ENCODE measurements at regions of chr9 and their contacts with region 1.

Region 1: DNA sequence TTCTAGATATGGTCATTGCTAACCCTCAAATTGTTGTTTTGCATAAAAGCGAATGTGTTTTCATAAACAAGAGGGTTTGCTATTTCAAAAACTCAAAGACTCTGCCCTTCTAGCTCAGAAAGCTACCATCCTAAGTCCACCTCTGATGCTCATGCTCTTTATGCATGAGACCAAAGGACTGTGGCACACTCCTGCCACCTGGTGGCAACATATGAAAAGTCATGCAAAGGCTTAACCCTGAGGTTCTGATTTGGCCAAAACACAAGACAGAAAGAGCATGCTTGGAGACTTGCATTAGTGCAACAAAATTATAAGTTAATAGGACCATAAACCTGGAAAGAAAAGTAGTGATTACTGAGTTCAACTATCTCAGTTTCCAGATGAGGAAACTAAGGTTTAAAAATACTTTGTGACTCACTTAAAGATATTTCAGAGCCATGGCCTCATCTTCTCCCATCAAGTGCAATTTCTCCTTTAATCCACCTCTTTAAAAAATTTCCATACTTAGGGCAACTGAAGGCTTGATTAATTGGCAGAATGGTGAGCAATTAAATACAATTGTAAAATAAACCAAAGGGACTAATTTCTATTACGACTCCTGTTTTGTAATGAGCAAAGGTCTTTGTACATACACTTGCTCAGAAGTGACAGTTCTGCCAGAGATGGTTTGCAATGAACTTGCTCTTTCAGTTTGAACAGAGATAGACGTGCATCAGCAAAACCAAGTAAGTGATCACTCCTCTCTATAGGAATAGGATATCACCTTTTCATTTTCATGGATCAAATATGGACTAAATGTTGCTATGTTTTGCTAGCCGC is 110.7 kb upstream of the RAD23B start:
- DNase-seq: peak; percentile 70
- ATAC-seq: peak; percentile 92
- H3K4me3 ChIP-seq: no peak overlapping the region
- H3K27ac ChIP-seq: no peak overlapping the region
- H3K4me1 ChIP-seq: peaks cover 0 to 54% of the 10 kb centered on the region in 2 experiments; a peak in 3 of 4 replicates
- H3K27me3 ChIP-seq: no peaks in the 10 kb centered on the region
- CTCF ChIP-seq: peak; percentile 74 to 93 (median 90)
- POLR2A ChIP-seq: no peak
- RAD21 ChIP-seq: peak; percentile 91

Region 2: DNA sequence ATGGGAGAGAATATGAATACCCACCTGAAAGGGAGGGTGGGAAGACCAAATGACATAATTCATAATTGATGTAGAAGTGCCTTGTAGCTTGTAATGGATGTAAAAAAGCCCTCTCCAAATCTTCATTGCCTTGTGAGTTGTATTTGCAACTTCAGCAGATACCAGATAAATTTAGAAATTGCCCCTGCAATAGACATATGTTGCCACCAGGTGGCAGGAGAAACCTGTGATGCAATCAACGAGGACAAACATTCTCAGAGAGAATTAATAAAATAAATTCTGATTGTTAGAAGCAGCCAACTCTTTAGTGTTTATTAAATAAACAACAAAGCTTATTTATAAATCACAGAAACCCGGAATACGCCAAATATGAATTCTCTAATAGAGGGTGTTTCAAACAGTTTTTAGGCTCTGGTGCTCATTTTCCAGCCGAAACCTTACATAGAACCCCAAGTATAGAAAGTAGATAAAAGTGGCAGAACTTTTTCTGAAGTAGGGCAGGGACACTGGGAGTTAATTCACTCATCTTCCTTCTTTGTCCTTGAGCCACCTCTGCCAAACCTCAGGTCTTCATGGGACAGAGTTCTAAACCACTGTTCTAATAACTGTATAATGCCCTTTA is 1330.2 kb before region 1 on chr9:
- CTCF ChIA-PET with region 1: interaction called, 3 read pairs
- POLR2A ChIA-PET with region 1: no interaction called
- RAD21 ChIA-PET with region 1: no interaction called
- intact Hi-C with region 1: loop called (anchors 1 kb)
- DNase-seq: peak; percentile 18
- ATAC-seq: no peak
- H3K4me3 ChIP-seq: no peak overlapping the region
- H3K27ac ChIP-seq: no peak overlapping the region
- H3K4me1 ChIP-seq: no peaks in the 10 kb centered on the region
- H3K27me3 ChIP-seq: no peaks in the 10 kb centered on the region
- CTCF ChIP-seq: peak; percentile 67 to 90 (median 79)
- POLR2A ChIP-seq: no peak
- RAD21 ChIP-seq: peak; percentile 84

Region 3: DNA sequence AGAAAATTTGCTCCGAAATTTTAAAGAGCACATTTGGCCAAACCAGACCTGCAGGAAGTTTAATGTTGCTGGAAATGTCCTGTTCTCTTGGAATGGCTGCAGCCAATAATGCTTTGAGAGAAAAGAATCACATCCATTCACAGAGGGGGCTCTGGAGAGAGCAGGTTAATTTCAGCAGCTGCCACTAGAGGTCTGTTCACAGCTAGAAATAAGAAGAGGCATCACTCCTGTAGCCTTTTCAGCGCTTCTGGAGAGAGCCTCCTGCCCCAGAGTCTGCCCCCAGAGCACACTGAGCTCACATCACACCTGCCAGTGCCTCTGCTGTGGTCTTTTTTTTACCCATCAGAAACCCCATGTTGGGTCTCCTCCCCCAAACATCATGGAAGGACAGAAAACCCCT is 14.0 kb before region 1 on chr9:
- CTCF ChIA-PET with region 1: interaction called, 7 read pairs
- POLR2A ChIA-PET with region 1: interaction called, 3 read pairs
- RAD21 ChIA-PET with region 1: no interaction called
- intact Hi-C with region 1: loop called (anchors 1 kb)
- DNase-seq: peak; percentile 51
- ATAC-seq: peak; percentile 97
- H3K4me3 ChIP-seq: no peak overlapping the region
- H3K27ac ChIP-seq: no peak overlapping the region
- H3K4me1 ChIP-seq: peaks cover 0 to 21% of the 10 kb centered on the region in 2 experiments; a peak in 2 of 4 replicates
- H3K27me3 ChIP-seq: no peaks in the 10 kb centered on the region
- CTCF ChIP-seq: peak; percentile 65 to 74 (median 69); a peak in 5 of 6 replicates
- POLR2A ChIP-seq: no peak
- RAD21 ChIP-seq: peak; percentile 83